Body of pancreas (tissue), 4 donors: ENCODE measurements at regions of chr4 and their contacts with region 1.

Region 1: DNA sequence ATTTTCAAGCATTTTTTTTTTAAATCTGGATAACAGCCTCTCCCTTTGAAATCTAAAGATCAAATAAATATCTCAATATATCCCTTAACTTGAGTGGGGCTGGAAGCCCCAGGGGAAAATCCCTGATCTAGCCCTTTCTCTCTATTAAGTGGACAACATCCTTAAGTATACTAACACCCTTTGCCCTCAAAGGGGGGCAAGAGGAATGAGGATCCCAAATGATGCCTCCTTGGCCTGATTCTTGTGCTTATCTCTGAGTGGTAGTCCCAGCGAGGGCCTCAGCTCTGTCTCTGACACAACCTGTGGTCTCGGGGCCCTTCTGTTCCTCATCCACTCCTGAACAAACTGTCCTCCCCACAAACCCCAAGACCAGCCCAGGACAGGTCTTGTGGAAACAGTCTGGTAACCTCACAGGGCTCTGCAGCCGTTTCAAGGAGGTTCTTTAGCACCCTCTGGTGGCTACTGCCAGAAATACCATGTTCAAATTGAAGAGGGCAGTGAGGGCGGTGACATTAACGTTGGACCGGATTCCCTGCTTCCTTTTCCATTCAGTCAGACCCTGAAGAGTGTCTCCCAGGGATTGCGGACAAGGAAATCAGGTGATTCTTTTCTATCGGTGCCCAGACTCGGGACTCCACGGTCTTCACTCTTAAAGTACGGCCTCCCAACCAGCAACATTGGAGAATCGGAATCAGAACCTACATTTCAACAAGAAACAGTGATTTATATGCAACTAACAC is 12.9 kb downstream of the CXCL13 start:
- DNase-seq: peak; percentile 82 to 88 (median 84)
- ATAC-seq: peak; percentile 90
- H3K4me3 ChIP-seq: no peak overlapping the region
- H3K27ac ChIP-seq: peak overlapping the region in 3 of 4 donors; percentile 42 to 65 (median 53)
- H3K4me1 ChIP-seq: peaks cover 37% of the 10 kb centered on the region
- H3K27me3 ChIP-seq: no peaks in the 10 kb centered on the region
- CTCF ChIP-seq: peak; percentile 67 to 87 (median 83)
- POLR2A ChIP-seq: no peak

Region 2: DNA sequence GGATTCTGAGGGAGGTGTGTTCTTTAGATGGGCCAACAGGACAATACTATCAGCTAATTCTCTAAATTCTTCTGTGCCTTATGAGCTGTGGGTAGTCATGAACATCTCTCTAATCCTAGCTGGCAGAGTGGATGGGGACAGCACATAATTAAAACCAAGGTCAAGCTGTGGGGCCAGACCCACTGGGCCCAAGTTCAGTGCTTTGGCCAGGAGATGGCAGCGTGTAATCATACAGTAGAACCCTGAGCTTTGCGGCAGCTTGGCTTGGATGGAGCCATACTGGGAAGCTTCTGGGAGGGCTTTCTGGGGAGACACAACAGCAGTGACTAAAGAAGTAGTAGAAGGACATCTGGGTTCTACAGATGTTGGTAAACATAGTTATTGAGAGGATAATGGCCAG is 153.3 kb before region 1 on chr4:
- intact Hi-C with region 1: loop called (anchors 10 kb)
- DNase-seq: peak; percentile 46 to 64 (median 56)
- ATAC-seq: peak; percentile 84
- H3K4me3 ChIP-seq: no peak overlapping the region
- H3K27ac ChIP-seq: no peak overlapping the region
- H3K4me1 ChIP-seq: no peaks in the 10 kb centered on the region
- H3K27me3 ChIP-seq: no peaks in the 10 kb centered on the region
- CTCF ChIP-seq: peak; percentile 38 to 72 (median 55)
- POLR2A ChIP-seq: no peak

Region 3: GRCh38 chr4:77697860-77698590 is 79.5 kb after region 1 on chr4:
- intact Hi-C with region 1: no loop called
- DNase-seq: peak; percentile 62 to 83 (median 74)
- ATAC-seq: peak; percentile 96
- H3K4me3 ChIP-seq: no peak overlapping the region
- H3K27ac ChIP-seq: peak overlapping the region; percentile 52 to 79 (median 74)
- H3K4me1 ChIP-seq: peaks cover 10% of the 10 kb centered on the region
- H3K27me3 ChIP-seq: no peaks in the 10 kb centered on the region
- CTCF ChIP-seq: peak; percentile 43 to 89 (median 79)
- POLR2A ChIP-seq: peak in 2 of 3 donors; percentile 33 to 48